CD14-positive monocyte (primary cell): ENCODE measurements at regions of chr21 and their contacts with region 1.

Region 1: GRCh38 chr21:43318841-43319781 is 107.8 kb downstream of the SIK1 start:
- DNase-seq: no peak
- H3K4me3 ChIP-seq: no peak overlapping the region
- H3K4me3 Mint-ChIP-seq: no peak overlapping the region
- H3K27ac ChIP-seq: no peak overlapping the region
- H3K27ac Mint-ChIP-seq: peak overlapping the region in 1 of 7 donors; percentile 43
- H3K4me1 ChIP-seq: no peaks in the 10 kb centered on the region
- H3K4me1 Mint-ChIP-seq: no peaks in the 10 kb centered on the region
- H3K27me3 ChIP-seq: no peaks in the 10 kb centered on the region
- H3K27me3 Mint-ChIP-seq: peaks cover 6 to 16% (median 6%) of the 10 kb centered on the region in 3 donors
- CTCF ChIP-seq: no peak

Region 2: DNA sequence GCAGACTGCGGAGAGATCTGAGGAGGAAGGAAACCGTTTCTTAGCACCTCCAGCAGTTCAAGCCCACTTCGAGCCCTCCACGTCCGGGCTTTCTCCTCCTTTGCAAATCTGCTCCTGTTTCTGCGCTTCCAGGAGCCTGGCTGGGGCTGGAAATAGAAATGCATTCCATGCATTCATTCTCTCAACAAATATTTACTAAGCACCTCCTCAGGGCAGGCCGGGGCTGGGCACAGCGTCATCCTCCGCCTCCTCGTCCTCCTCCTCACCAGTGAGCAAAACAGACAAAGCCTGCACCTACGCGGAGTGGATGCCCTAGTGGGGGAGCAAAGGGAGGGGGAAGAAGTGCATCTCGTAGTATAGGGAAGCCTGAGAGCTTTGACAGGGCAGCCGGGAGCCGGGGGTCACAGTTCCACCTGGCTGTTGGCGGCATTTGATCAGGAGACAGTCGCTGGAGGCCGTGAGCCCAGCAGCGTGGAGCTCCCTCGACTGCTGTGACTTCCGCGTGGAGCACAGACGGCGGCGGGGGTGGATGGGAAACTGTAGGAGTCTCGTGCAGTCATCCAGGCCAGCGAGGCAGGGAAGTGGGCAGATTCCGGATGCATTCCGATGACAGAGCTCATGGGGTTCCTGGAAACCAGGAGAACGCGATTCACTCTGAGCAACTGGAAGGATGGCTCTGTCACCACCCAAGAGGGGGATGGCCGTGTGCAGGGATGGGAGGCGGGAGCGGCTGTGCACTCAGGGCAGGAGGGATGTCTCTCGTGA is 14.4 kb after region 1 on chr21:
- intact Hi-C with region 1: loop called in 1 of 2 experiments (anchors 2 kb)
- DNase-seq: no peak
- H3K4me3 ChIP-seq: no peak overlapping the region
- H3K4me3 Mint-ChIP-seq: peak overlapping the region in 1 of 2 donors; percentile 57
- H3K27ac ChIP-seq: no peak overlapping the region
- H3K27ac Mint-ChIP-seq: peak overlapping the region in 3 of 7 donors; percentile 5 to 41 (median 21)
- H3K4me1 ChIP-seq: no peaks in the 10 kb centered on the region
- H3K4me1 Mint-ChIP-seq: peaks cover 17% of the 10 kb centered on the region
- H3K27me3 ChIP-seq: peaks cover 0 to 6% of the 10 kb centered on the region in 2 donors
- H3K27me3 Mint-ChIP-seq: peaks cover 5 to 14% (median 12%) of the 10 kb centered on the region in 3 donors
- CTCF ChIP-seq: no peak

Region 3: DNA sequence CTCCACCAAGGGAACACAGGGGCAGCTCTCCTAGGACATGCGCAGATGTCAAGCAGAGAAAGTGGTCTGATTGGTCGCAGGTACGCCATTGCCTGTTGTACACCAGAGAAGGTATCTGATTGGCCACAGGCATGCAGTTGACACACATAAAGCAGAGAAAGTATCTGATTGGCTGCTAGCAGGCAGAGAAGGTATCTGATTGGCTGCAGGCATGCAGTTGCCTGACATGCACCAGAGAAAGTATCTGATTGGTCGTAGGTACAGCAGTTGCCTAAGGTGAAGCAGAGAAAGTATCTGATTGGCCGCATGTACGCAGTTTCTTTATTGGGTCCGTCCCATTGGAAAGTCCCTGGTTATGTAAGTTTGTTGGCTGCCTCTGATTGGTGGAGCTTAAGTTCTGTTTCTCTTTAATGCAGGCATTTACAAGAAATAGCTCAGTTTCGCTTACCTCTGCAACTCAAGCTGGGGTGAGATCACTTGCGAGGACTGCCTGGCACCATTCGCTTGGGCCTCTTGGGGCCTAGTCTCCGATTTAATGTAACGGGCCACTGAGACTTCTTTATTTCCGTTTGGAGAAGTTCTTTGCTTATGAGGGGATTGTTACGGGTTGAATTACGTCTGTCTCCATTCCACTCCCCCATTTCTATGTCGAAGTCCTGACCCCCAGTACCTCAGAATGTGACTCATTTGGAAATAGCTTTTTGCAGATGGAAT is 33.6 kb after region 1 on chr21:
- intact Hi-C with region 1: loop called in 1 of 2 experiments (anchors 5 kb)
- DNase-seq: peak; percentile 57 to 82 (median 61)
- H3K4me3 ChIP-seq: no peak overlapping the region
- H3K4me3 Mint-ChIP-seq: no peak overlapping the region
- H3K27ac ChIP-seq: peak overlapping the region in 1 of 2 donors; percentile 26
- H3K27ac Mint-ChIP-seq: peak overlapping the region in 5 of 7 donors; percentile 51 to 84 (median 75)
- H3K4me1 ChIP-seq: peaks cover 9 to 13% of the 10 kb centered on the region in 2 donors
- H3K4me1 Mint-ChIP-seq: peaks cover 20% of the 10 kb centered on the region
- H3K27me3 ChIP-seq: no peaks in the 10 kb centered on the region
- H3K27me3 Mint-ChIP-seq: peaks cover 0 to 3% (median 0%) of the 10 kb centered on the region in 3 donors
- CTCF ChIP-seq: no peak

Region 4: DNA sequence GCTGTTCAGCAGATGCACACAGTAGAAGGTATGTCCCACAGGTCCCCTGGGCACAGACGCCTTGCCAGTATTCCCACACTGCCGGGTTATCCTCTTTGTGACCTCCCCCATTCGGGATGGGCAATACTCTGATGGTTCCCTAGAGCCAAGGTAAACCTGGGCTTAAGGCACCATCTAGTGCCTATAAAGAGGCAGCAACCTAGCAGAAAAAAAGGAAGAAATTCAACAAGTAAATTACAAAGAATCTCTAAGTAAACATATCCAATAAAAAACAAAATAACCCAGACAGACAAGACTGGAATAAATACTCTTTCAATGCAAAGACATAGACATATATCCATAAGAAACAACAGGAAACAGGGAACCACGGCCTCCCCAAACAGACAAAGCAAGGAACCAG is 300.7 kb after region 1 on chr21:
- intact Hi-C with region 1: loop called in 1 of 2 experiments (anchors 10 kb)
- DNase-seq: no peak
- H3K4me3 ChIP-seq: no peak overlapping the region
- H3K4me3 Mint-ChIP-seq: no peak overlapping the region
- H3K27ac ChIP-seq: no peak overlapping the region
- H3K27ac Mint-ChIP-seq: no peak overlapping the region
- H3K4me1 ChIP-seq: no peaks in the 10 kb centered on the region
- H3K4me1 Mint-ChIP-seq: no peaks in the 10 kb centered on the region
- H3K27me3 ChIP-seq: no peaks in the 10 kb centered on the region
- H3K27me3 Mint-ChIP-seq: peaks cover 0 to 6% (median 1%) of the 10 kb centered on the region in 3 donors
- CTCF ChIP-seq: no peak

Region 5: GRCh38 chr21:43825681-43826622 is 506.8 kb after region 1 on chr21:
- intact Hi-C with region 1: no loop called
- DNase-seq: peak in 1 of 3 donors; percentile 27
- H3K4me3 ChIP-seq: peak overlapping the region in 1 of 3 experiments; percentile 44
- H3K4me3 Mint-ChIP-seq: peak overlapping the region in 1 of 2 donors; percentile 57
- H3K27ac ChIP-seq: no peak overlapping the region
- H3K27ac Mint-ChIP-seq: peak overlapping the region in 2 of 7 donors; percentile 19 to 50
- H3K4me1 ChIP-seq: peaks cover 25 to 40% of the 10 kb centered on the region in 2 donors
- H3K4me1 Mint-ChIP-seq: peaks cover 35% of the 10 kb centered on the region
- H3K27me3 ChIP-seq: no peaks in the 10 kb centered on the region
- H3K27me3 Mint-ChIP-seq: peaks cover 3 to 13% (median 9%) of the 10 kb centered on the region in 3 donors
- CTCF ChIP-seq: peak; percentile 42